Activated naive CD4-positive, alpha-beta T cell treated with anti-CD3 and anti-CD28 coated beads for 36 hours (primary cell): ENCODE measurements at regions of chr1 and their contacts with region 1.

Region 1: GRCh38 chr1:17485280-17485679 is 45.8 kb upstream of the RCC2 start:
- DNase-seq: peak; percentile 25
- H3K4me3 Mint-ChIP-seq: no peak overlapping the region
- H3K27ac Mint-ChIP-seq: no peak overlapping the region
- H3K4me1 Mint-ChIP-seq: peaks cover 3% of the 10 kb centered on the region
- H3K27me3 Mint-ChIP-seq: peaks cover 8% of the 10 kb centered on the region

Region 2: GRCh38 chr1:17348125-17348979 is 136.9 kb before region 1 on chr1:
- CTCF ChIA-PET with region 1: no interaction called
- intact Hi-C with region 1: no loop called
- DNase-seq: no peak
- H3K4me3 Mint-ChIP-seq: no peak overlapping the region
- H3K27ac Mint-ChIP-seq: no peak overlapping the region
- H3K4me1 Mint-ChIP-seq: peaks cover 10% of the 10 kb centered on the region
- H3K27me3 Mint-ChIP-seq: peaks cover 2% of the 10 kb centered on the region

Region 3: DNA sequence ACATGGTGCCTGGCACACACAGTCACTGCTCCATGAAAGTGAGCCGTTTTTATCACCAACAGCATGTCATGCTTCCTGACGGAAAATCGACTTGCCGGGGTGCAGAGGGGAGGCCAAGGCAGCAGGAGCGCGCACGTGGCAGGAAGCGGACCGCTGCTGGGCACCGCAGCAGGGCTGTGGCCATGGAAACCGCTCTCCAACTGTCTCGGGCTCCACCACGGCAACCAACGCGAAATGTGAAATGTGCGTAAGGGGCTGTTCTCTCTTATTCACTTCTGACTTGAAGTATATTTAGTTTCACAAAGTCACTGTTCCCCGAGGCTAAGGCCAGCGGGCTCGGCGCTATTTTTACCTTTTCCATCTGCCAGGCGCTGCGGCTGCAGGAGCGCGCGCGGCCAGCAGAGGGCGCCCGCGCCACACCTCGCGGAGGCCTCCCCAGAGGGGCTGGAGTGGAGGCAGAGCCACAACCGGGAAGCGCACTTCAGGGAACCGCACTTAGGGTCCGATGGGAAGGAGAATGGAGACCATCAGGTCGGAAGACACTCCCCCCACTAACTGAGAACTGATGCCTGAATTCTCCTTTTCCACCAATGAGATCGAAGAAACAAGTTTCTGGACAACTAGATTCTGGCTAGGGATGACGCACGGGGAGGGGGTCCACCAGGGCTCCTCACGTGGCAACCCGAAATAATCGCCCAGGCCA is 65.5 kb before region 1 on chr1:
- CTCF ChIA-PET with region 1: no interaction called
- intact Hi-C with region 1: loop called (anchors 5 kb)
- DNase-seq: peak; percentile 66
- H3K4me3 Mint-ChIP-seq: no peak overlapping the region
- H3K27ac Mint-ChIP-seq: no peak overlapping the region
- H3K4me1 Mint-ChIP-seq: peaks cover 9% of the 10 kb centered on the region
- H3K27me3 Mint-ChIP-seq: no peaks in the 10 kb centered on the region